Activated naive CD4-positive, alpha-beta T cell treated with anti-CD3 and anti-CD28 coated beads for 36 hours (primary cell): ENCODE measurements at regions of chr11 and their contacts with region 1.

Region 1: GRCh38 chr11:64742889-64743590 is 902 bp downstream of the RASGRP2 start:
- DNase-seq: peak; percentile 77
- H3K4me3 Mint-ChIP-seq: no peak overlapping the region
- H3K27ac Mint-ChIP-seq: no peak overlapping the region
- H3K4me1 Mint-ChIP-seq: peaks cover 26% of the 10 kb centered on the region
- H3K27me3 Mint-ChIP-seq: peaks cover 6% of the 10 kb centered on the region

Region 2: DNA sequence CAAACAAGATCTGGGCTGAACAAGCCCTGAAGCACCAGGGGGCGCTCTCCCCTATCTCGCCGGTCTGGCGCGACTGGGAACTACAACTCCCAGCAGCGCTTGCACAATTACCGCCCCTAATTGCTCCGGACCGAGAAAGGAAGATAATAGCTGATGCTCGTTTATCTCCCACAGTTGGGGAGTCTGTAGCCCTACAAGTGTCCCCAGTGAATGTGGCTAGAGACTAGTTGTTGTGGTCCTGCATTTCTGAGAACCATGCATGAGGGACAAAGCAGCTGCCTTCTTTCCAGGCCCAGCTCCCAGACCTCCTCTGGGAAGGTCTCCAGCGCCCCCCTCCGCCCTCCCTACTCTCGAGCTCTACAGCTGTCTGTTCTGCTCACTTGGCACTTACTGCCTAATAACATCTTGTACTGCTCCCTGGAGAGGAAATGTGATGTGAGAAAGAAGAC is 54.5 kb before region 1 on chr11:
- CTCF ChIA-PET with region 1: interaction called, 26 read pairs
- intact Hi-C with region 1: loop called (anchors 1 kb)
- DNase-seq: peak; percentile 94
- H3K4me3 Mint-ChIP-seq: peak overlapping the region; percentile 39
- H3K27ac Mint-ChIP-seq: no peak overlapping the region
- H3K4me1 Mint-ChIP-seq: peaks cover 24% of the 10 kb centered on the region
- H3K27me3 Mint-ChIP-seq: peaks cover 11% of the 10 kb centered on the region

Region 3: GRCh38 chr11:64723117-64723906 is 19.7 kb before region 1 on chr11 and contains the start of gene NRXN2:
- CTCF ChIA-PET with region 1: interaction called, 3 read pairs
- intact Hi-C with region 1: loop called (anchors 1 kb)
- DNase-seq: peak; percentile 91
- H3K4me3 Mint-ChIP-seq: peak within 1 kb of the TSS; percentile 67
- H3K27ac Mint-ChIP-seq: no peak within 1 kb of the TSS
- H3K4me1 Mint-ChIP-seq: peaks cover 7% of the 10 kb centered on the region
- H3K27me3 Mint-ChIP-seq: peaks cover 22% of the 10 kb centered on the region
- total RNA-seq, gene NRXN2: 0.24 to 0.35 TPM

Region 4: DNA sequence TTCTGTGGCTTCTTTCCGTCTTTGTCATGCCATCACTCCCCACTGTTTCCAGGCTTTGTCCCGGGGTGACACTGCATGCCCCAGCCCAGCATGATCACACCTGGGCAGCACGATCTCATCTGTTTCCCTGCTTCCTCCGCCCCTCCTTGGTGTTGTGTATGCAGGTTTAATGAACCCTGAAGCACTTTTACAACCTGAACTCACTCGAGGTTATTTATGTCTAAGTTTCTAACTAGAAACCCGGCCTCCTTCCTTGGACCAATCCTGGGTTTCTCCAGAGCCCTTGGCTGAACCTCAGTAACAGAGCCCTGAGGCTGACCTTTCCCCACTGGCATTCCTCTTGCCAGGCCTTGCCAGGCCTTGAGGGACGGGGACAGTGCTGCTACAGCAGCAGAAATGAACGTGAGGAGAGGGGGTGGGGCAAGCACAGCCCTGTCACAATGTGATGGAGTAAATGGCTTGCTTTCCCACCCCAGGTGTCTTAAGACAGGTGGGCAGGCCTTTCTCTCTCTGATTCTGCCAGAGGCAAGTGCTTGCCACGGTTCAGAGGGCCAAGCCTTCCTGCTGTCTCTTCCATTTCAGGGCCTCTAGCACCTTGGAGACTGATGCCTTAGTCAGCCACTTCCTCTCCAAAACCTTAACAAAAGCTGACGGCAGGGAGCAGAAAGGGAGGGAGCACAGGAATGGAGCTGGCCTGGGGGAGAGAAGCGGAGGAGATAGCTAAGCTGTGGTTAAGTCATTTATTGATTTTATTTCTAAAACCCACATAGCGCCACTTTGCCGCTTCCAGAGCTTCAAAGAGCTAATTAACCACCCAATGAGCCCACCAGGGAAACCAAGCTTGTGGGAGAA is 19.9 kb after region 1 on chr11:
- CTCF ChIA-PET with region 1: interaction called, 9 read pairs
- intact Hi-C with region 1: loop called (anchors 1 kb)
- DNase-seq: peak; percentile 60
- H3K4me3 Mint-ChIP-seq: no peak overlapping the region
- H3K27ac Mint-ChIP-seq: peak overlapping the region; percentile 83
- H3K4me1 Mint-ChIP-seq: peaks cover 75% of the 10 kb centered on the region
- H3K27me3 Mint-ChIP-seq: no peaks in the 10 kb centered on the region

Region 5: GRCh38 chr11:64803163-64803845 is 60.3 kb after region 1 on chr11 and contains the start of gene MAP4K2:
- CTCF ChIA-PET with region 1: no interaction called
- intact Hi-C with region 1: loop called (anchors 1 kb)
- DNase-seq: peak; percentile 88
- H3K4me3 Mint-ChIP-seq: peak within 1 kb of the TSS; percentile 81
- H3K27ac Mint-ChIP-seq: peak within 1 kb of the TSS; percentile 89
- H3K4me1 Mint-ChIP-seq: peaks cover 31% of the 10 kb centered on the region
- H3K27me3 Mint-ChIP-seq: no peaks in the 10 kb centered on the region
- total RNA-seq, gene MAP4K2: 69.5 to 73.9 TPM

Region 6: GRCh38 chr11:64810271-64810890 is 67.3 kb after region 1 on chr11 and contains the start of gene MEN1:
- CTCF ChIA-PET with region 1: interaction called, 3 read pairs
- intact Hi-C with region 1: loop called (anchors 2 kb)
- DNase-seq: peak; percentile 93
- H3K4me3 Mint-ChIP-seq: peak within 1 kb of the TSS; percentile 97
- H3K27ac Mint-ChIP-seq: peak within 1 kb of the TSS; percentile 84
- H3K4me1 Mint-ChIP-seq: peaks cover 20% of the 10 kb centered on the region
- H3K27me3 Mint-ChIP-seq: no peaks in the 10 kb centered on the region
- total RNA-seq, gene MEN1: 23.9 TPM

Region 7: GRCh38 chr11:64854534-64855429 is 111.7 kb after region 1 on chr11:
- CTCF ChIA-PET with region 1: no interaction called
- intact Hi-C with region 1: loop called (anchors 5 kb)
- DNase-seq: peak; percentile 67
- H3K4me3 Mint-ChIP-seq: no peak overlapping the region
- H3K27ac Mint-ChIP-seq: peak overlapping the region; percentile 89
- H3K4me1 Mint-ChIP-seq: peaks cover 94% of the 10 kb centered on the region
- H3K27me3 Mint-ChIP-seq: no peaks in the 10 kb centered on the region

Region 8: GRCh38 chr11:64892411-64892831 is 149.4 kb after region 1 on chr11:
- CTCF ChIA-PET with region 1: no interaction called
- intact Hi-C with region 1: no loop called
- DNase-seq: no peak
- H3K4me3 Mint-ChIP-seq: no peak overlapping the region
- H3K27ac Mint-ChIP-seq: no peak overlapping the region
- H3K4me1 Mint-ChIP-seq: peaks cover 9% of the 10 kb centered on the region
- H3K27me3 Mint-ChIP-seq: no peaks in the 10 kb centered on the region